Heart right ventricle (tissue), 16 donors: ENCODE measurements at regions of chr7 and their contacts with region 1.

Region 1: GRCh38 chr7:82007315-82007714 is 237.5 kb upstream of the HGF start:
- DNase-seq: no peak
- ATAC-seq: peak in 3 of 8 donors; percentile 29 to 72 (median 41)
- H3K4me3 ChIP-seq: no peak overlapping the region
- H3K27ac ChIP-seq: peak overlapping the region in 2 of 10 donors; percentile 8 to 44
- H3K4me1 ChIP-seq: peaks cover 0 to 14% (median 10%) of the 10 kb centered on the region in 9 donors
- H3K27me3 ChIP-seq: no peaks in the 10 kb centered on the region
- CTCF ChIP-seq: no peak

Region 2: GRCh38 chr7:81990395-81990794 is 16.9 kb before region 1 on chr7:
- intact Hi-C with region 1: loop called in 1 of 10 experiments (anchors 1 kb)
- DNase-seq: no peak
- ATAC-seq: no peak
- H3K4me3 ChIP-seq: no peak overlapping the region
- H3K27ac ChIP-seq: no peak overlapping the region
- H3K4me1 ChIP-seq: no peaks in the 10 kb centered on the region
- H3K27me3 ChIP-seq: no peaks in the 10 kb centered on the region
- CTCF ChIP-seq: no peak

Region 3: GRCh38 chr7:82234457-82235049 is 227.2 kb after region 1 on chr7:
- intact Hi-C with region 1: no loop called
- DNase-seq: no peak
- ATAC-seq: peak in 2 of 8 donors; percentile 24 to 38
- H3K4me3 ChIP-seq: no peak overlapping the region
- H3K27ac ChIP-seq: peak overlapping the region in 1 of 10 donors; percentile 28
- H3K4me1 ChIP-seq: peaks cover 0 to 30% (median 11%) of the 10 kb centered on the region in 9 donors
- H3K27me3 ChIP-seq: no peaks in the 10 kb centered on the region
- CTCF ChIP-seq: peak; percentile 46 to 74 (median 55)